ENCODE measurements at regions of chr2 and their contacts with region 1.

Region 1: GRCh38 chr2:55718165-55719008 is 24.7 kb upstream of the PNPT1 start:
- DNase-seq: peak in 4 of 5 donors; percentile 50 to 89 (median 71)
- H3K4me3 ChIP-seq: no peak overlapping the region
- H3K27ac ChIP-seq: no peak overlapping the region
- H3K4me1 ChIP-seq: no peaks in the 10 kb centered on the region
- H3K27me3 ChIP-seq: no peaks in the 10 kb centered on the region
- CTCF ChIP-seq: peak; percentile 68

Region 2: DNA sequence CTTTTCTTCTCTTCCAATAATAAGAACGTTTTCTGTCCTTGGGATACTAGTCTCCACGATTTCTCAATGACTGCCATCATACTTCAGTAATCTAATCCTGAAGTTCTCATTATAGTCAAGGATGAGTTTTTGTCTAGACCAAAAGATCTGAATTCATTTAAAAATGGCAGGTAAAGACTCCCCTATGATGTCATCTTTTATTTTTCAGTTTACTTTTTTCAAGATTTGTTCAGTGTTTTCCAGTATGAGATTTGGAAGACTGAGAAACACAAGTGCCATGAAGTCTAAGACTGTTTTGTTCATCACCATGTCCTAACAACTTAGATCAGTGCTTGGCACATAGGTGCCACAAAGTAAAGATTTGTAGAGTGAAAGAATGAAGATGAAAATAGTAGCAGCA is 65.1 kb before region 1 on chr2:
- intact Hi-C with region 1: no loop called
- DNase-seq: no peak
- H3K4me3 ChIP-seq: no peak overlapping the region
- H3K27ac ChIP-seq: no peak overlapping the region
- H3K4me1 ChIP-seq: no peaks in the 10 kb centered on the region
- H3K27me3 ChIP-seq: no peaks in the 10 kb centered on the region
- CTCF ChIP-seq: no peak

Region 3: DNA sequence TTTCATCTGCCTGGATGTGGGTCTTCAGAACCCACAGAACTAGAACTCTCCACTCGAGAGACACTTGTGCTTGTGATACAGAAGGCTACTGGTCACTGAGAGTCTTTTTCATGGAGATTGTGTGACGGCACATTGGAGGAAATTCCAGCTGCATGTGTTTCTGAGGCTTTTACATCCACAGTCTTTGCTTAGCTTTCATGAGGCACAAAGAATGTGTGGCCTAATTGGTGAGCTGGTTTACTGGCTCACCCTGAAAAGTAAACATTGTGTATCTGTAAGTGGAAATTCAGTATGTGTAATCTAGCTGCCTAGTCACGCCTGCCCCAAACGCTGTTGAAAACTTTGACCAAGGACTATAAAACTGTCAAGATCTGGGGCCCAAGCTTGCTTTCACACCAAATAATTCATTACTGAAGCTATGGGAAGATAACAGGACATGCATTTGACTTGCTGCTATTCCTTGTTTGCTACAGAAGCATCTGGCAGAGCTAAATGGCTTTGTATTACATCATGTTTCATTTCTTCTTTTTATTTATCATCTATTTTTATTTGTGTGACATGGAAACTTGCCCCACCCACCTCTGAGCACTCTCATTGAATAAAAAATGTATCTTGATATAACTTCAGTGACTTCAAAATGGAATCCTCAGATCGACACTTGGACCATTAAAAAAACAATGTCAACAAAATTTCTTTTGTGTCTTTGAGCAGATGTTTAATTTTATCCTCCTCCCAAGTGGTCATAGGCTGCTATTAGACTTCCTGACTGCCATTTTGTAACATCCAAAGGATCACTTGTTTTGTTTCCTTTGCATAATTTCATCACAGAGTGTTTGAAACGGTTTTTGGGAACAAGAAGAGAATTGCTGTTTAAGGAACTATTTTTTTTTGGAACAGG is 125.0 kb after region 1 on chr2:
- intact Hi-C with region 1: no loop called
- DNase-seq: peak in 4 of 5 donors; percentile 56 to 94 (median 89)
- H3K4me3 ChIP-seq: no peak overlapping the region
- H3K27ac ChIP-seq: no peak overlapping the region
- H3K4me1 ChIP-seq: peaks cover 0 to 8% (median 0%) of the 10 kb centered on the region in 3 donors
- H3K27me3 ChIP-seq: no peaks in the 10 kb centered on the region
- CTCF ChIP-seq: no peak

Region 4: DNA sequence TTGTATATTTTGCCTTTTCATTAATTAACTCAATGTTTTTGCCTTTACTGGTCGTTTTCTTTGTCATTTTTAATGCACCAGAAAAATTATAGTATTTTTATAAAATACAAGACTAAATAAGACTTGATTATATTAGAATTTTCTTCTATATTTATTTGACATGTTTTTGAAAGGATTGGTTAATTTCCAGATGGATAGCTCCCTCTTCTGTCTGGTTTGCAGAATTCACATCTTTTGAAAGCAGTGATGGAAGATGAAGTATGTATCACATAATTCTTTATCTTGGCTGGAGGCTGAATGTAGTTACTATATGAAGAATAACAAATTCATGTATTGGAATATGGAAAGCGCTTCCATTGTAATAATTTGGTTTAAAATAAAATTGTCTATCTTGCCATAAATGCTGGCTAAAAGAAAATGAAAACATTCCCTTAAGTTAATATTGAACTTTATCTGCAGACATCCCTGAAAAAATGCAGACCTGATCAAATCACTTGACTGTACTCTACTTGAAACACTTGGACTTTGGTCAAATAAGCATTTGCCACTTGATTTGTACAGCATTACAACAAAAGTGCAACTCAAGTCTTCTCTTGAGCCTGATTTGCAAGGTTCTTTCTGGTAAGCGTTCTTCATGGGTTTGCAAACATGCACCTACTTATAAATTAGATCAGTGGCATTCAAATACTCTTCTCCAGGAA is 291.5 kb after region 1 on chr2:
- intact Hi-C with region 1: loop called (anchors 10 kb)
- DNase-seq: peak in 2 of 5 donors; percentile 68 to 71
- H3K4me3 ChIP-seq: peak overlapping the region in 1 of 3 donors; percentile 22
- H3K27ac ChIP-seq: no peak overlapping the region
- H3K4me1 ChIP-seq: peaks cover 2 to 5% (median 4%) of the 10 kb centered on the region in 3 donors
- H3K27me3 ChIP-seq: no peaks in the 10 kb centered on the region
- CTCF ChIP-seq: peak; percentile 49

Region 5: GRCh38 chr2:56132138-56132537 is 413.8 kb after region 1 on chr2:
- intact Hi-C with region 1: loop called (anchors 10 kb)
- DNase-seq: peak in 2 of 5 donors; percentile 68 to 82
- H3K4me3 ChIP-seq: no peak overlapping the region
- H3K27ac ChIP-seq: no peak overlapping the region
- H3K4me1 ChIP-seq: no peaks in the 10 kb centered on the region
- H3K27me3 ChIP-seq: no peaks in the 10 kb centered on the region
- CTCF ChIP-seq: peak; percentile 46

Region 6: DNA sequence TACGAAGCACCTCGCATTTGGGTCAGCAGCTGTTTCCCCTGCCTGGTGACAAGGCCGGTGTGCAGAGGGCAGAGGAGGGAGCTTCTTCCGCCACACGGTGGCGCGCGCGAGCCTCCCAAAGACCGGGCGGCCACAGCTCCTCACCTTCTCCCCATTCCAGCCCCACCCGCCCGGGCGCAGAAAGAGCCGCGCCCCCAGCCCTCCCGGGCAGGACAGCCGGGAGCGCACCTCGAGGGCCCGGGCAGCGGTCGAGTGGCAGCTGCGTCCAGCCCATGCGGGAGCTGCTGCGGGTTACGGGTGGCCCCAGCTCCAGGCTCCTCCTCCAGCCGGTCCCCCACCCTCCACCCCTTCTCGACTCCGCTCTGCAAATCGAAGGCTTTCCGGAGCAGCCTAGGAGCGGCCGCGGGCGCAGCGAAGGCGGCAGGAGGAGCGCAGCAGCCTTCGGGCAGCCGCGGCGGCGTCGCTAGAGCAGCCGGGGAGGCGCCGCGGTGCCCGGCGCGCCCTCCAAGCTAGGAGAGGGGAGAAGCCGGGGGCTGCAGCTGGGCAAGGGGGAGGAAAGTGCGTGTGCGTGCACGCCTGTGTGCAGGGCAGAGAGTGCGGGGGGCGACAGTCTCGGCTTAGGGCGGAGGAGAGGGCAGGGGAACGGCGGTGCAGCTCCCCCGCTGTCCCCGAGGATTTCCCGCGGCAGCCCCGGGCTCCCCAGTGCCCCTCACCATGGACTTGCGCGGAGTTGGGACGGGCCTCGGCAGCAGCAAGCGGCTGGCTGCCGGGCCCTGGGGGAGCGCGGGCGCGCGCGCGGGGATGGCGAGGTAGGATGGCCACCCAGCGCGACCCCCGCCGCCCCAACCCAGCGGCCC is 465.5 kb after region 1 on chr2 and contains the start of gene CCDC85A:
- intact Hi-C with region 1: no loop called
- DNase-seq: peak; percentile 92 to 93 (median 92)
- H3K4me3 ChIP-seq: peak within 1 kb of the TSS; percentile 48 to 71 (median 59)
- H3K27ac ChIP-seq: no peak within 1 kb of the TSS
- H3K4me1 ChIP-seq: peaks cover 0 to 5% (median 0%) of the 10 kb centered on the region in 3 donors
- H3K27me3 ChIP-seq: no peaks in the 10 kb centered on the region
- CTCF ChIP-seq: peak; percentile 81
- total RNA-seq, gene CCDC85A: 2.1 TPM

Measured in kidney (tissue), 22 donors.